HCT116 (cell line): ENCODE measurements at regions of chr16 and their contacts with region 1.

Region 1: GRCh38 chr16:85027349-85027957 is at the start of gene KIAA0513:
- DNase-seq: peak; percentile 86
- ATAC-seq: peak; percentile 87
- H3K4me3 ChIP-seq: peak within 1 kb of the TSS; percentile 56 to 82
- H3K27ac ChIP-seq: peak within 1 kb of the TSS; percentile 21
- H3K4me1 ChIP-seq: peaks cover 28 to 39% of the 10 kb centered on the region in 2 experiments
- H3K27me3 ChIP-seq: peaks cover 9% of the 10 kb centered on the region; the same call in 1 of the 2 replicates
- CTCF ChIP-seq: peak in 1 of 3 experiments; percentile 18; a peak in 2 of 6 replicates
- POLR2A ChIP-seq: peak; percentile 93
- RAD21 ChIP-seq: no peak
- total RNA-seq, gene KIAA0513: 6.6 TPM

Region 2: DNA sequence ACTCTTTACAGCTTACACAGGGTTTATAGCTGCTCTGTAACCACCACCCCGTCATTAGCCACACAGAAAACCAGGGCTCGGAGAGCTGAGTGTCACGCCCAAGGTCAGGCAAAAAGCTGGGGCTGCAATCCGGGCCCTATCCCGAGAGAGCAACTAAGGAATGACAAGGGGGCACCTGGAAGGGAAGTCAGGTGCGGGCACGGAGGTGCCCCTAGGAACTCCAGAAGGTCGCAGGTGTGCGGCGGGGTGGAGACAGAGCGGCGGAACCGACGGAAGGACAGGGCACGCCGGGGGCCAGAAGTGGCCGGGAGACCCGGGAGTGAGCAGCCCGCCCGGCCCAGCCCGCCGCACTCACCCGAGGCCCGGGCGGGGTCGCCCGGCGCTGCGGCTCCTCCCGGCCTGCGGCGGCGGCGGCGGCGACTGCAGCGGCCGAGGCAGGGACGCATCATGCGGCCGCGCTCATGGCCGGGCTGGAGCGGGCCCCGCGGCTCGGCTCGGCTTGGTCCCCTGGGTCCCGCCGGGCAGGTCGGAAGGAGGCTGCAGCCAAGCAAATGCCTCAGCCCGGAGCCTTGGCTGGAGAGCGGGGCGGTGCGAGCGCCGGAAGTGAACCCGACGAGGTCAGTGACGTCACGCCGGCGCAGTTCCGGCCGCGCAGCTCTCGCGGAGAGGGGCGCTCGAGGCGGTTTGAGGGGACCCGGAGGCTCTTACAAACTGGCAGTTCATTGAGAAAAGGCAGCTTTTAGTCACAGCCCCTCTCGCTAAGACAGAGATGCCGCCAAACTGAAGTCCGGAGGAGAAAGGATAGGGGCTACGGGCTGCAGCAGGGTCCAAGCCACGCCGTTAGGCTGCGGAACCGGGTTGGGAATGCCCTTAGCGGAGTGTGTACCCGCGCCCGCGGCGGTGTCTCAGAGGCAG is 16.3 kb before region 1 on chr16 and contains the start of gene ZDHHC7:
- CTCF ChIA-PET with region 1: interaction called, 5 read pairs
- POLR2A ChIA-PET with region 1: interaction called, 17 read pairs
- RAD21 ChIA-PET with region 1: no interaction called
- intact Hi-C with region 1: no loop called
- DNase-seq: peak; percentile 69
- ATAC-seq: peak; percentile 93
- H3K4me3 ChIP-seq: peak within 1 kb of the TSS; percentile 65 to 78
- H3K27ac ChIP-seq: peak within 1 kb of the TSS; percentile 93
- H3K4me1 ChIP-seq: peaks cover 9% of the 10 kb centered on the region in 2 experiments; a peak in 3 of 4 replicates
- H3K27me3 ChIP-seq: no peaks in the 10 kb centered on the region
- CTCF ChIP-seq: no peak
- POLR2A ChIP-seq: peak; percentile 96
- RAD21 ChIP-seq: no peak
- total RNA-seq, gene ZDHHC7: 39.9 TPM